Pancreas (tissue), 10 donors: ENCODE measurements at regions of chr1 and their contacts with region 1.

Region 1: DNA sequence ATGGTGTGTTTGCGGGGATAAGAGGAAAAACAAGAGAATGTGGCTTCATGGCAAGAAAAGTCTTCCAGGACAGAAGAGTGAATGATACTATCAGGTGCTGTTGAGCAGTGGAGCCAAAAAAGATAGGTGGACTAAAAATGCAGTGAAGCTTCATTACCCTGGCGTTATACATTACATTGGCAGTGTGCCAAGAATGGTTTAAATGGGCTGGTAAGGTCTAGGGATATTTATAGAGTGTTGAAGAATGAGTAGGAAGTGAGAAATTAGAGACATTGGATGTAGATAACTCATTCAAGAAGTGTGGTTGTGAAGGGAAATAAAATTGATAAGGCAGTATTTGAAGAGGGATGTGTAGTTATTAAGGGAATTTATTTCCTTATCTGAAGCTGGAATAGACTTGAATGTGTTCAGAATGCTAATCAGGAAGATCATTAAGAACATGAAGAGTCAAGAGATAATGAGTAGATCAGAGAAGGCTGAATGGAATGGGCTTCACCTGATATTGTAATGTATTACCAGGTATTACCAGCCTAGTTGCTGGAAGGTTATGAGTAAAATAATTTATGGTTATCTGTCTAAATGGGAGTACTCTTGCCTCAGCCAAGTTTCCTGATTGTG is 72.7 kb downstream of the MAST2 start:
- DNase-seq: no peak
- ATAC-seq: no peak
- H3K4me3 ChIP-seq: no peak overlapping the region
- H3K27ac ChIP-seq: no peak overlapping the region
- H3K4me1 ChIP-seq: no peaks in the 10 kb centered on the region
- H3K27me3 ChIP-seq: no peaks in the 10 kb centered on the region
- CTCF ChIP-seq: no peak

Region 2: DNA sequence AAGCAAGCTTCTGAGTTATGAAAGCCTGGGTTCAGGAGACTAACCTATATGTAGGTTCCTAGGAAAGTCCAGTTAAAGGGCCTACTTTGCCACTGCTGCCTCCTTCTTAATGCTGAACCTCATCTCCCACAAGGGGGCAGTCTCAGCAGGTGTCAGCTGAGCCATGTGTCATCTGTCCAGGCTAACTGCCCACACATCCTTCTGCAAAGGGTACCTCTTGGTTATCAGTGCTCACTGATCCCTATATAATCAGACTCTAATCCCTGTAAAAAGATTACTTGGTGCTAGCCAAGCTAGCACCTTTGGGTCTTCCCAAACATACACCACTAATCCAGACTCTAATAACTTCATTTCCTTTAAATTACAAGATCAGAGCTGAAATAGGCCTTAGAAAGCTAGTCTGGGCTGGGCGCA is 363.5 kb before region 1 on chr1:
- intact Hi-C with region 1: loop called in 1 of 3 experiments (anchors 10 kb)
- DNase-seq: peak in 5 of 6 donors; percentile 47 to 72 (median 50)
- ATAC-seq: peak; percentile 74 to 94 (median 88)
- H3K4me3 ChIP-seq: no peak overlapping the region
- H3K27ac ChIP-seq: no peak overlapping the region
- H3K4me1 ChIP-seq: no peaks in the 10 kb centered on the region
- H3K27me3 ChIP-seq: no peaks in the 10 kb centered on the region
- CTCF ChIP-seq: peak; percentile 27 to 66 (median 52)